ENCODE measurements at regions of chr12 and their contacts with region 1.

Region 1: GRCh38 chr12:117273091-117273490 is 82.8 kb upstream of the FBXO21 start:
- DNase-seq: peak in 1 of 2 donors; percentile 20
- ATAC-seq: peak in 5 of 8 donors; percentile 24 to 86 (median 69)
- H3K4me3 ChIP-seq: no peak overlapping the region
- H3K27ac ChIP-seq: no peak overlapping the region
- H3K4me1 ChIP-seq: no peaks in the 10 kb centered on the region
- H3K27me3 ChIP-seq: peaks cover 0 to 34% (median 8%) of the 10 kb centered on the region in 7 donors
- CTCF ChIP-seq: no peak

Region 2: DNA sequence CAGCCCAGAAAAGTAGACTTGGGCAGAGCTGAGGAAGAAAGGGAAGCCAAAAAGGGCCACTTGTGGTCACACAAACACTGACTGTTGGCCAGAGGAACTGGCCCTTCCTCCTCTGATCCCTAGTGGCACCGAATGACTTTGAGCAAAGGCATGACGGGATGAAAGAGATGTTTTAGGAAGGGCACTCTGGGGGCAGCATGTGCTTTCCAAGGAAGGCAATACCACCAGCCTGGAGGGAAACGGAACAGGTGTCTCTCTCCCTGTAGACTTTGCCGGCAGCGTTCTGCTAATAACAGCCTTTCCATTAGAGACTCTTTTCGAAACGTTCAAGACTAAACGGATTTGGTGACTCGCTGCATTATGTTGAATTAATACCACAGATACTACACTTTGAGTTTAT is 70.5 kb before region 1 on chr12:
- intact Hi-C with region 1: loop called in 1 of 10 experiments (anchors 2 kb)
- DNase-seq: no peak
- ATAC-seq: no peak
- H3K4me3 ChIP-seq: no peak overlapping the region
- H3K27ac ChIP-seq: no peak overlapping the region
- H3K4me1 ChIP-seq: no peaks in the 10 kb centered on the region
- H3K27me3 ChIP-seq: peaks cover 0 to 64% (median 6%) of the 10 kb centered on the region in 7 donors
- CTCF ChIP-seq: no peak

Region 3: GRCh38 chr12:117580718-117581062 is 307.6 kb after region 1 on chr12:
- intact Hi-C with region 1: no loop called
- DNase-seq: peak; percentile 11 to 50
- ATAC-seq: peak; percentile 38 to 82 (median 70)
- H3K4me3 ChIP-seq: no peak overlapping the region
- H3K27ac ChIP-seq: no peak overlapping the region
- H3K4me1 ChIP-seq: peaks cover 0 to 9% (median 0%) of the 10 kb centered on the region in 9 donors
- H3K27me3 ChIP-seq: peaks cover 0 to 37% (median 27%) of the 10 kb centered on the region in 7 donors
- CTCF ChIP-seq: no peak

Measured in heart right ventricle (tissue), 16 donors.